Uterus (tissue), 4 donors: ENCODE measurements at regions of chr16 and their contacts with region 1.

Region 1: DNA sequence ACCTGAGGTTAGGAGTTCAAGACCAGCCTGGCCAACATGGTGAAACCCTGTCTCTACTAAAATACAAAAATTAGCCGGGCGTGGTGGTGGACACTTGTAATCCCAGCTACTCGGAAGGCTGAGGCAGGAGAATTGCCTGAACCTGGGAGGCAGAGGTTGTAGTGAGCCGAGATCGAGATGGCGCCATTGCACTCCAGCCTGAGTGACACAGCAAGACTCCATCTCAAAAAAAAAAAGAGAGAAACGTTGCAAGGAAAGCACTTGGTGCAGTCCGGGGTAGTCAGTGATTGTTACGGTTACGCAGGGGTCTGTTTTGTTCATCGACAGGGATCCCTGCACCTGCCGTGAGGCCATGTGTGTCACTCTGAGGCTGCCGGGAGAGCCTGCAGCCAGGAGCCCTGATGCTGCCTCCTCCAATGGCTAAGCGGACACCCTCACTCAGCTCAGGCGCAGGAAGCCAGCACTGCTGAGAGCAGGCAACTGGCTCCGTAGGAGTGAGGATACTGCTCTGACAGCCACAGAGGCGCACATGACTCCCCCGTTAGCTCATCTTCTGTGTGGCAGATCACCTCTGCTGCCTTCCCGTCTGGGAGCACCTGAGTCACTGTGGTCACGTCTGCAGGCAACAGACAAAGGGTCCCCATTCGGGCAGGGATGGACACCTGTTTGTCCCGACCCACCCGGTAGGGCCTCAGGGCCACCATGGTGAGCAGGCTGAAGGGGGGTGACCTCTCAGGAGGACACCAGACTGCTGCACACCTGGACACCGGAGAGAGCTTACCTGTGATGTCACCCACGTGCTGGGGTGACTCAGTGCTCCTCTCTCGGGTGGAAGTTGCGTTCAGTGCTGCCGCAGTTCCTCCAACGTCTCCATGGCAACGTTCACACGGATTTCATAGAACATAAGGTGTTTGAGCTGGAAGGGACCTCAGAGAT is 5.2 kb upstream of the RAB26 start:
- DNase-seq: no peak
- H3K4me3 ChIP-seq: no peak overlapping the region
- H3K27ac ChIP-seq: no peak overlapping the region
- H3K4me1 ChIP-seq: peaks cover 3 to 5% of the 10 kb centered on the region in 2 donors
- H3K27me3 ChIP-seq: no peaks in the 10 kb centered on the region
- CTCF ChIP-seq: no peak
- POLR2A ChIP-seq: no peak

Region 2: DNA sequence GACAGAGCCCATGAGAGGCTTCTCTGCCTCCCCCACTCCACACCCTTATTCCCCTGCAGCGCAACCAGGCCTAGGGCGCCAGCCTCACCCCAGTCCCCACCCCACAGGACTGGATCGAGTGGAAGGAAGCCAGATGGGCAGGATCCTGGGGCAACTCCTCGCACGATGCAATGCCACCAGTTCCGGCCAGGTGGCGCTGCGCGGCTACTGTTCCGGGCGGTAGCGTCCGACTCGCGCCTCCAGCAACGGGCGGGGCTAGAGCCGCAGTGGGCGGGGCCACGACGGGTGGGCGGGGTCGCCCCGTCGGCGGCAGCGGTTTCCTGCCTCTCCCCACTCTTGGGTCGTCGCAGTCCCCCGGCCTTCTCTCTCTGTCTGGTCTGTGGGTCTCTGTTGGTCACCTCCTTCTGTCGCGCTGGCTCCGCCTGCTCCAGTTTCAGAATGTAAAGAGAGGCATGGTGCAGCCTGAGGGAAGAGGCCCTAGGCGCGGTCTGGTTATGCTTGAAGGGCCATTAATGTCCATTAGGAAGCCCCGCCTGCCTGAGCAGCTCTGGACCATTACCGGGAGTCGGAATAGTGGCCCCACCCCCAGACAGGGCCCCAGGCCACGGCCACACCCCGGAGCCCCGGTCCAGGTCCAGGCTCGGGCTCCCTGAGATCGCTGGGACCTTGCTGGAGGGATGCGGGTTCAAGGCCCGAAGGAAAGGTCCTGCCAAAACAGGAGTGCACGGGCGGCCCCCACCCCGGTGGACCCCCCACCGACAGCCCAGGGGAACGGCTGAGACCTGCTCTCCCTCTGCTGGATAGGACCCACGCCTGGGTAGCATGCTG is 119.9 kb before region 1 on chr16:
- intact Hi-C with region 1: loop called (anchors 5 kb)
- DNase-seq: peak; percentile 90 to 96
- H3K4me3 ChIP-seq: peak overlapping the region; percentile 12 to 23
- H3K27ac ChIP-seq: peak overlapping the region; percentile 58 to 67
- H3K4me1 ChIP-seq: peaks cover 0 to 18% of the 10 kb centered on the region in 2 donors
- H3K27me3 ChIP-seq: peaks cover 0 to 9% of the 10 kb centered on the region in 2 donors
- CTCF ChIP-seq: peak; percentile 99 to 100 (median 99)
- POLR2A ChIP-seq: peak; percentile 53 to 62